Endothelial cell of umbilical vein (primary cell): ENCODE measurements at regions of chr1 and their contacts with region 1.

Region 1: DNA sequence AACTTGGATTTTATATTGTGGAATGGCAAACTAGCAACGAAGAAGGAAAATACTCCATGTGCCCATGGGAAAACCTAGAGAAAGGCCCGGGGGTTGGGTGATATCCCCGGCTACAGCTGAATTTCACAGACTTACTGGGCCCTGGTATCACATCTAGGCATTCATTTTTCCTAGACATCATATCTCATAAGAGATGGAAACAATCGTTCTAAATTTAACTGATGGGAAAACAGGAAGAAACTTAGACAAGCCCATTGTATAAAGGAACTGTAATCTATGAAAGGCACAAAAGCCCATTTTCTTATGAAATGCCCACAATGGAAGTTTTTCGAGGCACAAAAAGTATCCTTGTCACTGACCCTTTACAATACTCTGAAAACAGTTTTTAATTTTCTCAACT is 407.9 kb upstream of the LYPLAL1 start:
- DNase-seq: peak; percentile 90
- H3K4me3 ChIP-seq: no peak overlapping the region
- H3K27ac ChIP-seq: peak overlapping the region; percentile 3
- H3K4me1 ChIP-seq: peaks cover 6% of the 10 kb centered on the region
- H3K27me3 ChIP-seq: no peaks in the 10 kb centered on the region
- CTCF ChIP-seq: no peak
- POLR2A ChIP-seq: no peak

Region 2: GRCh38 chr1:218930472-218931241 is 164.9 kb after region 1 on chr1:
- CTCF ChIA-PET with region 1: no interaction called
- POLR2A ChIA-PET with region 1: no interaction called
- dilution Hi-C with region 1: no loop called
- intact Hi-C with region 1: loop called (anchors 5 kb)
- DNase-seq: peak; percentile 86
- H3K4me3 ChIP-seq: no peak overlapping the region
- H3K27ac ChIP-seq: no peak overlapping the region
- H3K4me1 ChIP-seq: peaks cover 10% of the 10 kb centered on the region
- H3K27me3 ChIP-seq: no peaks in the 10 kb centered on the region
- CTCF ChIP-seq: no peak
- POLR2A ChIP-seq: no peak

Region 3: DNA sequence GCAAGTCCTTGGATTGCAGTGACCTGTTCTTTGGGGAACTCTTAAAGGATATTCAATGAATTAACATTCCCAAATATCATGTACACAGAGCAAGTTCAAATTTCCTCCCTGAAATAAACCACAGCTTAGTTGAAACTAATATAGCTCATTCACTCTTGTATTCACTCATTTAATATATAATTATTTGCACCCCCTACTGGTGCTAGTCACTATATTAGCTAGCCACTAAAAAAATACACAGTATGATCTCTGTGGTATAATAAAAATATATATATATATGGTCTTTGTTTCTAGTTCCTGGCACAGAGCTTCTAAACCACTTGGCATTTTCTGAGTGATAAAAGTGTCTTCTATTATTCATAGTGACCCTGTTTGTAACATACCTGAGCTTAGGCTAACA is 230.6 kb after region 1 on chr1:
- CTCF ChIA-PET with region 1: no interaction called
- POLR2A ChIA-PET with region 1: no interaction called
- dilution Hi-C with region 1: no loop called
- intact Hi-C with region 1: loop called (anchors 5 kb)
- DNase-seq: peak; percentile 26
- H3K4me3 ChIP-seq: no peak overlapping the region
- H3K27ac ChIP-seq: no peak overlapping the region
- H3K4me1 ChIP-seq: no peaks in the 10 kb centered on the region
- H3K27me3 ChIP-seq: no peaks in the 10 kb centered on the region
- CTCF ChIP-seq: peak in 1 of 2 donors; percentile 23
- POLR2A ChIP-seq: no peak